ENCODE measurements at regions of chr10 and their contacts with region 1.

Region 1: DNA sequence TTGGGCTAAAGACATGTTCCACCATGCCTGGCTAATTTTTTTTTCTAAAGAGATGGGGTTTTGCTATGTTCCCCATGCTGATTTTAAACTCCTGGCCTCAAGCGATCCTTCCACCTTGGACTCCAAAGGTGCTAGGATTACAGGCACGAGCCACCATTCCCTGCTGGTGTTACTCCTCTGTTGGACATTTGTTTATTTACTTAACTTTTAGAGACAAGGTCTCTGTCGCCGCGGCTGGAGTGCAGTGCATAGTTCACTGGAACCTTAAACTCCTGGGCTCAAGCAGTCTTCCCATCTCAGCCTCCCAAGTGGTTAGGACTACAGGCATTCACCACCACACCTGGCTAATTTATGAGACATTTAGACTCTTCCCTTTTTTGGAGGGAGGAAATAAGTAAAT is 38.9 kb downstream of the CCAR1 start:
- DNase-seq: no peak
- ATAC-seq: no peak
- H3K4me3 ChIP-seq: no peak overlapping the region
- H3K4me3 Mint-ChIP-seq: no peak overlapping the region
- H3K27ac ChIP-seq: no peak overlapping the region
- H3K27ac Mint-ChIP-seq: no peak overlapping the region
- H3K4me1 ChIP-seq: no peaks in the 10 kb centered on the region
- H3K4me1 Mint-ChIP-seq: peaks cover 0 to 13% (median 4%) of the 10 kb centered on the region in 7 donors
- H3K27me3 ChIP-seq: no peaks in the 10 kb centered on the region
- H3K27me3 Mint-ChIP-seq: no peaks in the 10 kb centered on the region

Region 2: DNA sequence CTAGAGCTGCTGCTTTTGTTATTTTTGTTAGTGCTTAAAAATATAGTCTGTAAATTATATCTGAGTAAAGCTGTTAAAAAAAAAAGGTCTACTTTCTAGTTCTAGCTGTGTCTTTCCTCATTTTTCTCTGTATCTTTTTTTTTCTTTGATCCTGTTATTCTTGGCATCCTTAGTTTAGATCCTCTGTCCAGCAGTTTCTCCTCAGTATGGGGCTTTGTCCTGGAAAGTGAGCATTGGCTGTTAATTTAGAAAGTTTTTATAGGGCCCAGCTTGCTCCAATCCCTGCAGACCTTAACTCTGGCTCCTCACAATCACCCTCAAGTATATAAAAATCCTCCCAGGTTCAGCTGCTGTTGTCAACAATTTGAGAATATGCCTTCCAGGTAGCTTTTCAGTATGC is 164.6 kb after region 1 on chr10:
- CTCF ChIA-PET with region 1: no interaction called
- POLR2A ChIA-PET with region 1: no interaction called
- intact Hi-C with region 1: loop called in 1 of 2 experiments (anchors 10 kb)
- DNase-seq: no peak
- ATAC-seq: no peak
- H3K4me3 ChIP-seq: no peak overlapping the region
- H3K4me3 Mint-ChIP-seq: no peak overlapping the region
- H3K27ac ChIP-seq: no peak overlapping the region
- H3K27ac Mint-ChIP-seq: peak overlapping the region in 6 of 9 donors; percentile 32 to 85 (median 45)
- H3K4me1 ChIP-seq: no peaks in the 10 kb centered on the region
- H3K4me1 Mint-ChIP-seq: peaks cover 0 to 17% (median 12%) of the 10 kb centered on the region in 7 donors
- H3K27me3 ChIP-seq: no peaks in the 10 kb centered on the region
- H3K27me3 Mint-ChIP-seq: no peaks in the 10 kb centered on the region

Measured in naive thymus-derived CD4-positive, alpha-beta T cell (primary cell).